Adrenal gland (tissue), 19 donors: ENCODE measurements at regions of chr15 and their contacts with region 1.

Region 1: GRCh38 chr15:85168642-85169173 is 187.1 kb downstream of the PDE8A start:
- DNase-seq: peak in 4 of 7 donors; percentile 37 to 52 (median 40)
- H3K4me3 ChIP-seq: peak overlapping the region in 2 of 4 donors; percentile 17 to 26
- H3K27ac ChIP-seq: no peak overlapping the region
- H3K4me1 ChIP-seq: peaks cover 4 to 6% of the 10 kb centered on the region in 2 donors
- H3K27me3 ChIP-seq: no peaks in the 10 kb centered on the region
- CTCF ChIP-seq: peak in 5 of 6 experiments; percentile 33 to 56 (median 47)
- POLR2A ChIP-seq: no peak

Region 2: DNA sequence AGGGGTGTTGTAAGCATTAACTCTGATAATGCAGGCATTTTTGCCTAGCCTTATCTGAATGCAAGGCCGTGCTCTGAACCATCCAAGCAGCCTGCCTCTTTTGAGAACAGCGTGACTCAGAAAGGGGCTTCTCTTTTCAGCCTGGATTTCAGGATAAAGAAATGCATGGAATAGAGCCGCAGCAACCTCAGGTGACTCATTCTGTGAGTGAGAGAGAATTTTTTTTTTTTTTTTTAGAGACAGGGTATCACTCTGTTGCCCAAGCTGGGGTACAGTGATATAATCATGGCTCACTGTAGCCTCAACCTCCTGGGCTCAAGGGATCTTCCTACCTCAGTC is 207.6 kb before region 1 on chr15:
- intact Hi-C with region 1: loop called in 1 of 2 experiments (anchors 10 kb)
- DNase-seq: peak in 4 of 7 donors; percentile 45 to 73 (median 64)
- H3K4me3 ChIP-seq: no peak overlapping the region
- H3K27ac ChIP-seq: peak overlapping the region; percentile 2 to 88 (median 54)
- H3K4me1 ChIP-seq: peaks cover 10 to 20% of the 10 kb centered on the region in 2 donors
- H3K27me3 ChIP-seq: no peaks in the 10 kb centered on the region
- CTCF ChIP-seq: no peak
- POLR2A ChIP-seq: no peak

Region 3: GRCh38 chr15:85100186-85100937 is 68.3 kb before region 1 on chr15:
- intact Hi-C with region 1: no loop called
- DNase-seq: no peak
- H3K4me3 ChIP-seq: no peak overlapping the region
- H3K27ac ChIP-seq: no peak overlapping the region
- H3K4me1 ChIP-seq: peaks cover 0 to 10% of the 10 kb centered on the region in 2 donors
- H3K27me3 ChIP-seq: no peaks in the 10 kb centered on the region
- CTCF ChIP-seq: no peak
- POLR2A ChIP-seq: no peak